ENCODE measurements at regions of chr17 and their contacts with region 1.

Region 1: DNA sequence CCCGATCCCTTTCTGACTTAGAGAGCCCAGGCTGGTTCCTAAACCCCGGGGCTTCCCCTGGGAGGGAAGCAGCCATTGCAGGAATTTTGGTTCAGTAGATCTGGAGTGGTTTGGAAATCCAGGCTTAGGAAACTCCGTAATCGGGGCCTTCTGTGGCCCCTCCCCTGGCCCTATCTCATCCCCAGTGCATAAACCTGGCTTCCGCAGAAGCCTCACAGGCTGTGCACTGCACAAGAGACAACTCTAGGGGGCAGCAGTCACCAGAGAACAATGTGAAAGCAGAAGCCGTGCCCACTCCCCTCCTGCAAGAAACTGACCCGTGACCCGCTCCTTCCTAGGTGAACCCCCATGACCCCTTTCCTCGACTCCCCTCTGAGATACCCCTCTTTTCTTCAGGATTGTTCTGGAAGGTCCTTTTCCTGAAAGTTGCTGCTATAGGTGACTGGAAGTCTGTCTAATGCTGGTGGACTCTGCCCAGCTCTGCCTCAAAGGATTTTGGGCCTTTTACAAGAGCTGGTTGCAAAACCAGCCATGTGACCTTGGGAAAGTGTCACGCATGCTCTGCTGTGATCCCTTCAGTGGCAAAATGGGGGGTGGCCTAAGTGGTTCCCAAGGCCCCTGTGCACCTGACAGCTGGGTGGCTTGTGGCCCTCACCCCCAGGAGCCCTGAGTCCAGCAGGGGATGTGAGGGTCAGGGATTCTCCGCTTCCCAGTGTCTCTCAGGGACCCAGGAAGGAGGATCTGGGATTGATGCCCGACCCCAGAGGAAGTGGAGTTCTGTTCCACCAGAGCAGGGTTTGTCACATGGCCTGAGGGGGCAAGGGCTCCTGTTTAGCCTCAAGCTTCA is 14.4 kb downstream of the GUCY2D start:
- DNase-seq: peak; percentile 77
- ATAC-seq: peak; percentile 92
- H3K4me3 Mint-ChIP-seq: peak overlapping the region; percentile 64
- H3K27ac Mint-ChIP-seq: no peak overlapping the region
- H3K4me1 Mint-ChIP-seq: peaks cover 11% of the 10 kb centered on the region
- H3K27me3 Mint-ChIP-seq: peaks cover 14% of the 10 kb centered on the region
- CTCF ChIP-seq: peak; percentile 85

Region 2: DNA sequence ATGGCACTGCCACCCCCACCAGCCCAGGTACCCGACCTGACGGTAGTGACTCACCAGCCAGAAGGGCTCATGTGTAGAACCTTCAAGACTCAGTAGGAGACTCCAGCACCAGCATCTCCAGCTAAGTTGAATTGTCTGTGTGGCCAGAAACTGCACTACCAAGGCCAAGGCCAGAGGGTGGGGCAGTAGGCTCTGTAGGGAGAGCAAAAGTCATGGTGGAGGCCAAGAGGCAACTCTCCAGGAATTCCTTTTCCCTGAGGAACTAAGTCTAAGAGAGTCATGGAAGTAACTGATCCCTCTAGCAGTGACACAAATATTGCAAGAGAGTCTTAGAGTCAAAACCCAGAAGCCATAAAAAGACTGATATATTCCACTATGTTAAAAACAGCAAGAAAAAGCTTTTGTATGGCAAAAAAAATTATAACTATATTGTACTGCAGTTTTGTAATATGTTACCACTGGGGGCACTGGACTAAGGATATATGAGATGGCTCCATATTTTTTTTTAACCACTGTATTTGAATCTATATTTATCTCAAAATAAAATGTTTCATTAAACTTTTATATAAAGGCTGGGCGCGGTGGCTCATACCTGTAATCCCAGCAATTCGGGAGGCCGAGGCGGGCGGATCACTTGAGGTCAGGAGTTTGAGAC is 44.6 kb before region 1 on chr17:
- CTCF ChIA-PET with region 1: no interaction called
- POLR2A ChIA-PET with region 1: no interaction called
- intact Hi-C with region 1: no loop called
- DNase-seq: no peak
- ATAC-seq: no peak
- H3K4me3 Mint-ChIP-seq: no peak overlapping the region
- H3K27ac Mint-ChIP-seq: no peak overlapping the region
- H3K4me1 Mint-ChIP-seq: no peaks in the 10 kb centered on the region
- H3K27me3 Mint-ChIP-seq: peaks cover 4% of the 10 kb centered on the region
- CTCF ChIP-seq: peak; percentile 21

Region 3: GRCh38 chr17:7997186-7997585 is 19.7 kb before region 1 on chr17:
- CTCF ChIA-PET with region 1: interaction called, 11 read pairs
- POLR2A ChIA-PET with region 1: interaction called, 3 read pairs
- intact Hi-C with region 1: no loop called
- DNase-seq: peak; percentile 74
- ATAC-seq: peak; percentile 87
- H3K4me3 Mint-ChIP-seq: no peak overlapping the region
- H3K27ac Mint-ChIP-seq: no peak overlapping the region
- H3K4me1 Mint-ChIP-seq: peaks cover 11% of the 10 kb centered on the region
- H3K27me3 Mint-ChIP-seq: peaks cover 19% of the 10 kb centered on the region
- CTCF ChIP-seq: peak; percentile 56

Measured in activated CD8-positive, alpha-beta T cell treated with anti-CD3 and anti-CD28 coated beads for 36 hours (primary cell).